Activated T-helper 2 cell treated with anti-CD3 and anti-CD28 coated beads, Interferon-gamma antibody, Interleukin-2, Interleukin-4, amounts not matched to agents 10 μg/mL and 5 μg/mL and 100 μg/mL, durations not matched to agents 14 hours and 24 hours and 36 hours (primary cell): ENCODE measurements at regions of chr6 and their contacts with region 1.

Region 1: DNA sequence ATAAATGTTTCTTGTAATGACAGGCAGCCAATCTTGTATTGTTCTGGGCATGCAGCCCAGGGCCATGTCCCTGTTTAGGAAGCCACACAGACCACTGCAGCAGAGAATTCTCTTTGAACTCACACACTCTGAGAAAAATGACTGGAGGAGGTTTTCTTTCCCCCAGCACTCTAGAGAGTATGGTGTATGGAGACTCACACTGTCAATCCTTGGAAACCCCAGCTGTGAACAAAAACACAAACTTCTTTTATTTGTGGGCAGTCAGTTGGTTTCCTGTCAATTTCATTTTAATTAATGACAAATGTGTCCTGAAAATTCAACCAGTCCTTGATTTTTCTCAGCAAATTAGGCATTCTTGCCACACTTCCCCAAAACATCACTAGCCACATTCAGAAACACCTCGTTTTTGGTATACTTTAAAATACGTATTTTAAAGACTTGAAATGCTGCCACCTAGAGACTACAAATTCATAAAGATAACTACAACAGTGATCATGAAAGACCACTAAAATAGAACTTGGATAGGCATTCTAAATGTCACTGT is 52.9 kb upstream of the UFL1 start:
- DNase-seq: no peak
- H3K4me3 Mint-ChIP-seq: no peak overlapping the region
- H3K27ac Mint-ChIP-seq: no peak overlapping the region
- H3K4me1 Mint-ChIP-seq: peaks cover 36% of the 10 kb centered on the region
- H3K27me3 Mint-ChIP-seq: peaks cover 21% of the 10 kb centered on the region

Region 2: DNA sequence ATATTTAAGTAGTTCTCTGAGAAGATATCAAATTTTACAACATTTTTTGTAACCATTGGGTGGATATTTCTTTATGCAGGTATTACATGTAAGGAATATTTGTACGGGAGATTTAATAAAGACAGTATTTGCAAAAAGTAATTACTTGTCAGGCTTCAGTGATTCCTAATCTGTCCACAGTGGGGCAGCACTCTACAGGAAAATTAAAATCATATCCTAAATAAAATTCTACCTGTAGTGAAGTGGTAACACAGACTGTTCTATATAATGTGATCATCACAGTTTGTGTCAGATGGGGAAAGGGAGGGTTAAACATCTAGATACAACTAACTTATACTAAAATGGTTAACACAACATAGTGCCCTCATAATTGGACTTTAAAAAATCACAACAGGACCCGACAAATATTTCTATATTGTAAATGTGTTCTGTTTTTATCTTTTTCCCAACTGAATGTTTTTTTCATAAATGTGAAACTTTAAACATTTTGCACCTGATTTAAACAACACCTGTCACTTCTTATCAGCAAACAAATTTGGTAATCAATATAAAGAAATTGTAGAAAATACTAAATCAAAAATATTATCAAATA is 1037.0 kb before region 1 on chr6:
- intact Hi-C with region 1: loop called (anchors 5 kb)
- DNase-seq: no peak
- H3K4me3 Mint-ChIP-seq: no peak overlapping the region
- H3K27ac Mint-ChIP-seq: no peak overlapping the region
- H3K4me1 Mint-ChIP-seq: no peaks in the 10 kb centered on the region
- H3K27me3 Mint-ChIP-seq: no peaks in the 10 kb centered on the region

Region 3: DNA sequence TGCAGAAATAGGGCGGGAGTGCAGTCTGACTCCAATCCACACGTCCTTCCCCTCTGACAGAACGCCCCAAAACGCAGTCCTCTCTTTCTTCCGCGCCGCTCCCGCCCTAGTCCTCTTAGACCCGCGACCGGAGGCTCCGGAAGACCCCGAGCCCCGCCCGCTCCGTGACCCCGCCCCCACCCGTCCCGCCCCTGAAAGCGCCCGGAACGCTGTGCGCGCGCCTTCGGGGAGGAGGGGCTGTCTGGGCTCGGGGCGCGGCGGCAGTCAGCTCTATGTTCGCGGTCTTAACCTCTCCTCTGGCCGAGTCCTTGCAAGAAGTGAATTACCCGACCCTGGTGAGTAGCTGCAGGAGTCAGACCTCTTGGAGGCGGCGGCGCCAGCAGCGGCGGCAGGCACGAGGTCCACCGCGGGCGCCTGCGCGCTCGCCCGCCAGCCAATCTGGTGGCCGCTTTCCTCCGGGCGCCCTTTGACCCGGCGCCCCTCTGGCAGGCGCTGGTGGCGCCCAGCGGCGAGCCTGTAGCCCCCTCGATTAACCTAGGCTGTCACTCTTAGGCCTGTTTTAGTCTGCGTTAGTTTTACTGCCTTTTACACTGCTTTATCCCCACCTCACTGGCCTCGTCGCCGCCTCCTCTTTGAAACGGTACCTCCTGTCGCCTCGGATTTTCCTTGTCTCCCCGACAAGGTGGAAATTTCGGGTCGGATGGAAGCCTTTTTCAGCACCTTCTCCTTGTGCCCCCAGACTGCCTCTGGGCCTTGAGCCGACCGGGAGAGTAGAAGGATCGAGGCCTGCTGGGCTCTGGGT is 891.2 kb before region 1 on chr6 and contains the start of gene MANEA:
- intact Hi-C with region 1: loop called (anchors 10 kb)
- DNase-seq: peak; percentile 79
- H3K4me3 Mint-ChIP-seq: peak within 1 kb of the TSS; percentile 95
- H3K27ac Mint-ChIP-seq: peak within 1 kb of the TSS; percentile 99
- H3K4me1 Mint-ChIP-seq: peaks cover 45% of the 10 kb centered on the region
- H3K27me3 Mint-ChIP-seq: no peaks in the 10 kb centered on the region
- total RNA-seq, gene MANEA: 22.5 and 23.1 TPM in 2 replicates

Region 4: DNA sequence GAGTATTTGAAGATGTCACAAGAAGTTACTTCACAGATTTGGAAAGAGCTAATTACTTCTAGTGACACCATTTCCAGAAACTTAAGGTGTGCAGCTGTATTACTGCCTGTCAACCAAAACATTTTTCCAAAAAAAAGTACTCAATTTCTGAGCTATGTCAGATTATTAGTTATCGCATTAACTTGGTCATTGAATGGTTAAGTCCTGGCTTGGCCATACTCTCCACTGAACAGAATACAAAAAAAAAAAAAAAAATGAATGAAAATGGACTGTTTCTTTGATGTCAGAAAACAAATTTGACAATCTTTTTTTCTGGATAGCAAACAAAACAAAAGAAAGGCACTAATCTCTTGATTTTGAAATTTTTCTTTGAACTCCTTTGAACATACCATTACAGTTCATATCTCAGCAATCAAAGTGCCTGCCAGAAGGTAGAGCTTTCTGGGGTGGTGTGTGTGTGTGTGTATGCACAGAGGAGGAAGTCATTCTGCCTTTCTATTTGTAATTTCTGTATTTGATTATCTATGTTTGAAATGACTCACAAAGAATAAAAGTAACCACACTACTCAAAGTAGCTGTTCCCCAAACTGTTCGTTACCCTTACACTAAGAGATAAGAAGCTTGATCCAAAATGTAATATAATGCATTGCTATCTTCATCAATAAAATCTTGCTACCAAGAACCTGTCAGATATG is 663.8 kb before region 1 on chr6:
- intact Hi-C with region 1: loop called (anchors 5 kb)
- DNase-seq: peak; percentile 13
- H3K4me3 Mint-ChIP-seq: no peak overlapping the region
- H3K27ac Mint-ChIP-seq: no peak overlapping the region
- H3K4me1 Mint-ChIP-seq: peaks cover 14% of the 10 kb centered on the region
- H3K27me3 Mint-ChIP-seq: peaks cover 5% of the 10 kb centered on the region

Region 5: GRCh38 chr6:96157018-96157565 is 311.7 kb before region 1 on chr6:
- intact Hi-C with region 1: loop called (anchors 10 kb)
- DNase-seq: no peak
- H3K4me3 Mint-ChIP-seq: peak overlapping the region; percentile 6
- H3K27ac Mint-ChIP-seq: no peak overlapping the region
- H3K4me1 Mint-ChIP-seq: peaks cover 6% of the 10 kb centered on the region
- H3K27me3 Mint-ChIP-seq: peaks cover 3% of the 10 kb centered on the region

Region 6: GRCh38 chr6:96304997-96305396 is 163.8 kb before region 1 on chr6:
- intact Hi-C with region 1: loop called (anchors 1 kb)
- DNase-seq: no peak
- H3K4me3 Mint-ChIP-seq: no peak overlapping the region
- H3K27ac Mint-ChIP-seq: no peak overlapping the region
- H3K4me1 Mint-ChIP-seq: peaks cover 7% of the 10 kb centered on the region
- H3K27me3 Mint-ChIP-seq: no peaks in the 10 kb centered on the region

Region 7: GRCh38 chr6:96410467-96410866 is 58.3 kb before region 1 on chr6:
- intact Hi-C with region 1: no loop called
- DNase-seq: no peak
- H3K4me3 Mint-ChIP-seq: no peak overlapping the region
- H3K27ac Mint-ChIP-seq: no peak overlapping the region
- H3K4me1 Mint-ChIP-seq: no peaks in the 10 kb centered on the region
- H3K27me3 Mint-ChIP-seq: no peaks in the 10 kb centered on the region

Region 8: GRCh38 chr6:96878143-96878542 is 409.4 kb after region 1 on chr6:
- intact Hi-C with region 1: no loop called
- DNase-seq: no peak
- H3K4me3 Mint-ChIP-seq: no peak overlapping the region
- H3K27ac Mint-ChIP-seq: no peak overlapping the region
- H3K4me1 Mint-ChIP-seq: no peaks in the 10 kb centered on the region
- H3K27me3 Mint-ChIP-seq: peaks cover 9% of the 10 kb centered on the region

Region 9: GRCh38 chr6:97059473-97059872 is 590.7 kb after region 1 on chr6:
- intact Hi-C with region 1: loop called (anchors 10 kb)
- DNase-seq: no peak
- H3K4me3 Mint-ChIP-seq: no peak overlapping the region
- H3K27ac Mint-ChIP-seq: no peak overlapping the region
- H3K4me1 Mint-ChIP-seq: peaks cover 4% of the 10 kb centered on the region
- H3K27me3 Mint-ChIP-seq: peaks cover 6% of the 10 kb centered on the region